ENCODE measurements at regions of chr1 and their contacts with region 1.

Region 1: DNA sequence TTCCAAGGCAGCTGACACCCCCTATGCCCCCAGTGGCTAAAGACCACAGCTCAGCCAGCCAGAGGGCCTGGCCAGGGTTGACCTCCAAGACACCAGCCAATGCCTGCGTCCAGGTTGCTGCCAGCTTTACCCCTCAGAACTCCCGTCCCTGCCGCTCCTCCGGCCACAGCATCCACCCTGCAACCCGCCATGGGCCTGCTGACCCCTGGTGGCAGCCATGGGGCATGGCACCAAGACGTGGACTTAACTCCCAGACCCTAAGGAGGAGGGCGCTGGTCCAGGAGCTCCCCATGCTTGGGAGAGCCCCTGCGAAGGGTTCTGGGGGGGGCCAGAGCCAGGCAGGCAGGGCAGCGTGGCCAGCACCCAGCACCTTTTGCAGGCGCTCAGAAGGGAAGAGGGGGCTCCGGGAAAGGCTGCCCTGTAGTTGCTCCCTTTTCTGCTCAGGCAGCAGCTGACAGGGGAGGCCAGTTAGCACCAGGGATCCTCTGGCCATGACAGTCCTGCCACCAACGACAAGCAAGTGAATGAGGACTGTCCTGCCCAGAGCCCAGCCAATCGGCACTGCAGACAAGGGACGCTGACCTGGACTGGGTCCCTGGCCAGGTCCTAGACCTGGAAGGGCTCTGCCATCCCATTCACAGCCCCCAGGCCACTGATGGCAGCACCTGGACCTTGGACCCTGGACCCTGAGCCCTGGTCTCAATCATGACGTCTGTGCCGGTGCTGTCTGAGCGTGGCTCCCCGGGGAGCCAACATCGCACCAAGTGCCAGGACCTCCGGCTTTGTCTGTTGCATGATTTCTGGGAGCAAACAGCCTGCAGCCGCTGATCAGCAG is 246.2 kb downstream of the NPHP4 start:
- DNase-seq: peak; percentile 37 to 71 (median 40)
- H3K4me3 ChIP-seq: no peak overlapping the region
- H3K4me3 Mint-ChIP-seq: no peak overlapping the region
- H3K27ac ChIP-seq: no peak overlapping the region
- H3K27ac Mint-ChIP-seq: peak overlapping the region in 1 of 8 donors; percentile 47
- H3K4me1 ChIP-seq: peaks cover under 1% of the 10 kb centered on the region
- H3K4me1 Mint-ChIP-seq: peaks cover 0 to 7% (median 4%) of the 10 kb centered on the region in 3 donors
- H3K27me3 ChIP-seq: no peaks in the 10 kb centered on the region
- H3K27me3 Mint-ChIP-seq: peaks cover 15 to 19% of the 10 kb centered on the region in 2 donors

Region 2: GRCh38 chr1:5514519-5515183 is 231.3 kb before region 1 on chr1:
- CTCF ChIA-PET with region 1: interaction called, 53 read pairs
- POLR2A ChIA-PET with region 1: no interaction called
- DNase-seq: peak; percentile 41 to 75 (median 55)
- H3K4me3 ChIP-seq: no peak overlapping the region
- H3K4me3 Mint-ChIP-seq: no peak overlapping the region
- H3K27ac ChIP-seq: no peak overlapping the region
- H3K27ac Mint-ChIP-seq: no peak overlapping the region
- H3K4me1 ChIP-seq: no peaks in the 10 kb centered on the region
- H3K4me1 Mint-ChIP-seq: no peaks in the 10 kb centered on the region
- H3K27me3 ChIP-seq: peaks cover 6% of the 10 kb centered on the region
- H3K27me3 Mint-ChIP-seq: peaks cover 18 to 26% of the 10 kb centered on the region in 2 donors

Region 3: GRCh38 chr1:5637171-5637570 is 108.8 kb before region 1 on chr1:
- CTCF ChIA-PET with region 1: interaction called, 38 read pairs
- POLR2A ChIA-PET with region 1: no interaction called
- DNase-seq: peak in 2 of 5 donors; percentile 14 to 59
- H3K4me3 ChIP-seq: no peak overlapping the region
- H3K4me3 Mint-ChIP-seq: no peak overlapping the region
- H3K27ac ChIP-seq: no peak overlapping the region
- H3K27ac Mint-ChIP-seq: no peak overlapping the region
- H3K4me1 ChIP-seq: no peaks in the 10 kb centered on the region
- H3K4me1 Mint-ChIP-seq: peaks cover 3 to 8% (median 7%) of the 10 kb centered on the region in 3 donors
- H3K27me3 ChIP-seq: no peaks in the 10 kb centered on the region
- H3K27me3 Mint-ChIP-seq: peaks cover 21 to 30% of the 10 kb centered on the region in 2 donors

Region 4: GRCh38 chr1:5667513-5668325 is 78.3 kb before region 1 on chr1:
- CTCF ChIA-PET with region 1: interaction called, 12 read pairs
- POLR2A ChIA-PET with region 1: no interaction called
- DNase-seq: peak in 3 of 5 donors; percentile 22 to 68 (median 25)
- H3K4me3 ChIP-seq: peak overlapping the region; percentile 3
- H3K4me3 Mint-ChIP-seq: peak overlapping the region; percentile 41 to 93 (median 74)
- H3K27ac ChIP-seq: no peak overlapping the region
- H3K27ac Mint-ChIP-seq: peak overlapping the region; percentile 59 to 95 (median 82)
- H3K4me1 ChIP-seq: peaks cover 23% of the 10 kb centered on the region
- H3K4me1 Mint-ChIP-seq: peaks cover 7 to 66% (median 54%) of the 10 kb centered on the region in 3 donors
- H3K27me3 ChIP-seq: no peaks in the 10 kb centered on the region
- H3K27me3 Mint-ChIP-seq: peaks cover 0 to 5% of the 10 kb centered on the region in 2 donors

Measured in CD8-positive, alpha-beta memory T cell (primary cell).